B cell (primary cell): ENCODE measurements at regions of chr10 and their contacts with region 1.

Region 1: DNA sequence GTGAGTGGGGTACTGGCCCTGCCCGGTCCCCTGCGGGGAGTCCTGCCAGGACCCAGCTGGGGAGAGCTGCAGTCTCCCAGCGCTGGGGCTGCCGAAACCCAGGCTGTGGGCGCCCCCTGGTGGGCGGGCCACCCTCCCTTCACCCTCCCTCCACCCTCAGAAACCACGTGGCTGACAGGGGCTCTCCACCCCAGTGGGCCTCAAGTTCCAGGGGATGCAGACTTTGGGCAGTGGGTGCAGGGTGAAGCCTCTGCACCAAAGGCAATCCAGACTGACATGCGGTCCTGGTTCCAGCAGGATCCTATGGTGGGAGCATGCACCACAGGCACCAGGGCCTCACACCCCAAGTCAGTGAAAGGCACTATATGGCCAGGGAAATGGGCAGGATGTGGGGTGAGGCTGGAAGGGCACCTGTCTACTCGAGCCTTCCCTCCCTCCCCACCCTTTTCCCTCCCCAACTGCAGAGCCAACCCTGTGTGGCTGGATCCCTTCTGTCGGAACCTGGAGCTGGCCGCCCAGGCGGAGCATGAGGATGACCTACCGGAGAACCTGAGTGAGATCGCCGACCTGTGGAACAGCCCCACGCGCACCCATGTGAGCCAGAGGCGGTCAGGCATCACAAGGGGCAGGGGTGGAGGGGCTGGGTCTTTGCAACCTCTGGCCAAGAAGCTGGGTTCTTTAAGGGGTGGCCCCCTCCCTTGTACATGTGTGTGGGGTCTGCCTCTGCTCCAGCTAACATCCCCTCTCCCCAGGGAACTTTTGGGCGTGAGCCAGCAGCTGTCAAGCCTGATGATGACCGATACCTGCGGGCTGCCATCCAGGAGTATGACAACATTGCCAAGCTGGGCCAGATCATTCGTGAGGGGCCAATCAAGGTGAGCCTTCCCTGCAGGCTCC is 38.8 kb downstream of the PSAP start:
- DNase-seq: peak; percentile 85
- ATAC-seq: peak; percentile 93
- H3K4me3 ChIP-seq: no peak overlapping the region
- H3K4me3 Mint-ChIP-seq: no peak overlapping the region
- H3K27ac ChIP-seq: no peak overlapping the region
- H3K27ac Mint-ChIP-seq: no peak overlapping the region
- H3K4me1 ChIP-seq: peaks cover 5 to 11% of the 10 kb centered on the region in 2 donors
- H3K4me1 Mint-ChIP-seq: peaks cover 6% of the 10 kb centered on the region
- H3K27me3 ChIP-seq: no peaks in the 10 kb centered on the region
- H3K27me3 Mint-ChIP-seq: peaks cover 4% of the 10 kb centered on the region
- CTCF ChIP-seq: peak; percentile 84

Region 2: DNA sequence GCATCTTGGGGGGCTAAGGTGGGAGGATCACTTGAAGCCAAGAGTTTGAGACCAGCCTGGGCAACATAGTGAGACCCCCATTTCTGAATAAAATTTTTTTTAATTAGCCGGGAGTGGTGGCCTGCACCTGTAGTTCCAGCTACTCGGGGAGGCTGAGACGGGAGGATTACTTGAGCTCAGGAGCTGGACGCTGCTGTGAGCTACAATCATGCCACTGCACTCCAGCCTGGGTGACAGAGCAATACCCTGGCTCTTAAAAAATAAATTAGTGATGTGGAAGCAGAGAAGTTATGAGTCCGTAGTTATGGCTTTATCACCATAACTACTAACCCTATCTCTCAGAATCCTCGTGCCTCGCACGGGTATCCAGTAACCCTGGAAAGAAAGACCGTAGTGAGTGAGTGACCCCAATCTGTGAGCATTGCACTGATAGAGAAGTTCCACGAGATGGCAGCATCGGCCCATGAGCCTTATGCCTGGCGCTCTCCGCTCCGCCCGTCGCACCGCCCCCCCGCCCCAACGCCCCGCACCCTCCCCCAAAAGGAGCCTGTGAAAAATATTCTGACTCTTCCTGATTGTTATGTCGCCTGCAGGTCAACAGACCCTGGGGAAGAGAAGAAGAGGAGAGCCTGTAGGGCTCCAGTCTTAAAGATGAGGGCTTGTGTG is 498.1 kb before region 1 on chr10:
- CTCF ChIA-PET with region 1: interaction called, 15 read pairs
- POLR2A ChIA-PET with region 1: no interaction called
- intact Hi-C with region 1: loop called (anchors 1 kb)
- DNase-seq: peak; percentile 76
- ATAC-seq: peak; percentile 32
- H3K4me3 ChIP-seq: no peak overlapping the region
- H3K4me3 Mint-ChIP-seq: no peak overlapping the region
- H3K27ac ChIP-seq: no peak overlapping the region
- H3K27ac Mint-ChIP-seq: no peak overlapping the region
- H3K4me1 ChIP-seq: peaks cover 7 to 20% of the 10 kb centered on the region in 2 donors
- H3K4me1 Mint-ChIP-seq: peaks cover 16% of the 10 kb centered on the region
- H3K27me3 ChIP-seq: peaks cover 0 to 4% (median 0%) of the 10 kb centered on the region in 4 experiments
- H3K27me3 Mint-ChIP-seq: peaks cover 12% of the 10 kb centered on the region
- CTCF ChIP-seq: peak; percentile 97

Region 3: GRCh38 chr10:71383972-71384687 is 428.1 kb before region 1 on chr10:
- CTCF ChIA-PET with region 1: interaction called, 9 read pairs
- POLR2A ChIA-PET with region 1: interaction called, 3 read pairs
- intact Hi-C with region 1: loop called (anchors 5 kb)
- DNase-seq: peak; percentile 79
- ATAC-seq: peak; percentile 99
- H3K4me3 ChIP-seq: no peak overlapping the region
- H3K4me3 Mint-ChIP-seq: no peak overlapping the region
- H3K27ac ChIP-seq: no peak overlapping the region
- H3K27ac Mint-ChIP-seq: no peak overlapping the region
- H3K4me1 ChIP-seq: peaks cover 2 to 7% of the 10 kb centered on the region in 2 donors
- H3K4me1 Mint-ChIP-seq: peaks cover 7% of the 10 kb centered on the region
- H3K27me3 ChIP-seq: peaks cover 0 to 7% (median 0%) of the 10 kb centered on the region in 4 experiments
- H3K27me3 Mint-ChIP-seq: peaks cover 7% of the 10 kb centered on the region
- CTCF ChIP-seq: peak; percentile 89

Region 4: GRCh38 chr10:71569775-71570588 is 242.3 kb before region 1 on chr10:
- CTCF ChIA-PET with region 1: interaction called, 13 read pairs
- POLR2A ChIA-PET with region 1: no interaction called
- intact Hi-C with region 1: no loop called
- DNase-seq: peak; percentile 77
- ATAC-seq: peak; percentile 57
- H3K4me3 ChIP-seq: no peak overlapping the region
- H3K4me3 Mint-ChIP-seq: no peak overlapping the region
- H3K27ac ChIP-seq: no peak overlapping the region
- H3K27ac Mint-ChIP-seq: no peak overlapping the region
- H3K4me1 ChIP-seq: no peaks in the 10 kb centered on the region
- H3K4me1 Mint-ChIP-seq: no peaks in the 10 kb centered on the region
- H3K27me3 ChIP-seq: no peaks in the 10 kb centered on the region
- H3K27me3 Mint-ChIP-seq: peaks cover 5% of the 10 kb centered on the region
- CTCF ChIP-seq: peak; percentile 86

Region 5: GRCh38 chr10:71666639-71667386 is 145.5 kb before region 1 on chr10:
- CTCF ChIA-PET with region 1: interaction called, 32 read pairs
- POLR2A ChIA-PET with region 1: interaction called, 14 read pairs
- intact Hi-C with region 1: loop called (anchors 1 kb)
- DNase-seq: peak; percentile 55
- ATAC-seq: peak; percentile 46
- H3K4me3 ChIP-seq: no peak overlapping the region
- H3K4me3 Mint-ChIP-seq: peak overlapping the region; percentile 0
- H3K27ac ChIP-seq: no peak overlapping the region
- H3K27ac Mint-ChIP-seq: peak overlapping the region; percentile 2
- H3K4me1 ChIP-seq: peaks cover 19 to 22% of the 10 kb centered on the region in 2 donors
- H3K4me1 Mint-ChIP-seq: peaks cover 17% of the 10 kb centered on the region
- H3K27me3 ChIP-seq: no peaks in the 10 kb centered on the region
- H3K27me3 Mint-ChIP-seq: no peaks in the 10 kb centered on the region
- CTCF ChIP-seq: no peak

Region 6: GRCh38 chr10:71771821-71772617 is 40.2 kb before region 1 on chr10:
- CTCF ChIA-PET with region 1: interaction called, 23 read pairs
- POLR2A ChIA-PET with region 1: no interaction called
- intact Hi-C with region 1: no loop called
- DNase-seq: peak; percentile 27
- ATAC-seq: no peak
- H3K4me3 ChIP-seq: peak overlapping the region; percentile 82 to 97 (median 90)
- H3K4me3 Mint-ChIP-seq: peak overlapping the region; percentile 94
- H3K27ac ChIP-seq: peak overlapping the region; percentile 88 to 95
- H3K27ac Mint-ChIP-seq: peak overlapping the region; percentile 92
- H3K4me1 ChIP-seq: peaks cover 90 to 98% of the 10 kb centered on the region in 2 donors
- H3K4me1 Mint-ChIP-seq: peaks cover 93% of the 10 kb centered on the region
- H3K27me3 ChIP-seq: no peaks in the 10 kb centered on the region
- H3K27me3 Mint-ChIP-seq: no peaks in the 10 kb centered on the region
- CTCF ChIP-seq: no peak

Region 7: GRCh38 chr10:71927776-71928592 is 115.7 kb after region 1 on chr10:
- CTCF ChIA-PET with region 1: no interaction called
- POLR2A ChIA-PET with region 1: no interaction called
- intact Hi-C with region 1: no loop called
- DNase-seq: no peak
- ATAC-seq: no peak
- H3K4me3 ChIP-seq: no peak overlapping the region
- H3K4me3 Mint-ChIP-seq: no peak overlapping the region
- H3K27ac ChIP-seq: no peak overlapping the region
- H3K27ac Mint-ChIP-seq: no peak overlapping the region
- H3K4me1 ChIP-seq: no peaks in the 10 kb centered on the region
- H3K4me1 Mint-ChIP-seq: no peaks in the 10 kb centered on the region
- H3K27me3 ChIP-seq: peaks cover 0 to 4% (median 0%) of the 10 kb centered on the region in 4 experiments
- H3K27me3 Mint-ChIP-seq: peaks cover 15% of the 10 kb centered on the region
- CTCF ChIP-seq: no peak